ENCODE measurements at regions of chr1 and their contacts with region 1.

Region 1: GRCh38 chr1:62131093-62131725 is 63.4 kb upstream of the L1TD1 start:
- DNase-seq: peak; percentile 3
- H3K4me3 Mint-ChIP-seq: no peak overlapping the region
- H3K27ac Mint-ChIP-seq: no peak overlapping the region
- H3K4me1 Mint-ChIP-seq: no peaks in the 10 kb centered on the region
- H3K27me3 Mint-ChIP-seq: no peaks in the 10 kb centered on the region

Region 2: DNA sequence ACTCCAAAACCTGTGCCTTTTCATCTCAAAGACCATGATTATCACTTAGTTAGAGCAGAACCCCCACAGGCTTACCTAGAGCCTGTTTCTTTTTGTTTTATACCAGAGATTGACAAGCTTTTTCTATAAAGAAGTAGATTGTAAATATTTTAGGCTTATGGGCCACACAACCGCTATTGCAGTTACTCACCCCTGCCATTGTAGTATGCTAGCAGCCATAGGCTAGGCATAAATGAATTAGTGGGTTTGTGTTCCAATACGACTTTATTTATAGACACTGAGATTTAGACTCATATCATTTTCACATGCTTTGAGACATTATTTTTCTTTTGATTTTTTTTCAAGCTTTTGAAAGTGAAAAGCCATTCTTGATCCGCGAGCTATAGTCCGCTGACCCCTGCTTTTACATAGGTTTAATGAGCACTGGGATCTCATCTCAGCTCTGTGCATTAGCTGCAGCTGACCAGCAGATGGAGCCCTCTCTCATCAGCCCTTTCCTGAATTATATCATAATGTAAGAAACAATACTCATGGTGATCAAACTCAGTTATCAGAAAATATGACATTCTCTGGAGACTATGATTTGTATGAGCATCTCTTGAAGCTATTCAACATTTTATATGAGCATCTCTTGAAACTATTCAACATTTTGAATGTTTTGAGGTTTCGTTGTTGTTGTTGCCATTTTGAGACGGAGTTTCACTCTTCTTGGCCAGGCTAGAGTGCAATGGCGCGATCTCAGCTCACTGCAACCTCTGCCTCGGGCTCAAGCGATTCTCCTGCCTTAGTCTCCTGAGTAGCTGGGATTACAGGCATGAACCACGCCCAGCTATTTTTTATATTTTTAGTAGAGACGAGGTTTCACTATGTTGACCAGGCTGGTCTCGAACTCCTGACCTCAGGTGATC is 48.5 kb before region 1 on chr1:
- intact Hi-C with region 1: loop called (anchors 1 kb)
- DNase-seq: no peak
- H3K4me3 Mint-ChIP-seq: no peak overlapping the region
- H3K27ac Mint-ChIP-seq: no peak overlapping the region
- H3K4me1 Mint-ChIP-seq: no peaks in the 10 kb centered on the region
- H3K27me3 Mint-ChIP-seq: no peaks in the 10 kb centered on the region

Region 3: GRCh38 chr1:62391369-62391971 is 260.3 kb after region 1 on chr1:
- intact Hi-C with region 1: no loop called
- DNase-seq: no peak
- H3K4me3 Mint-ChIP-seq: no peak overlapping the region
- H3K27ac Mint-ChIP-seq: no peak overlapping the region
- H3K4me1 Mint-ChIP-seq: no peaks in the 10 kb centered on the region
- H3K27me3 Mint-ChIP-seq: peaks cover 3% of the 10 kb centered on the region